PC-9 (cell line): ENCODE measurements at regions of chr13 and their contacts with region 1.

Region 1: DNA sequence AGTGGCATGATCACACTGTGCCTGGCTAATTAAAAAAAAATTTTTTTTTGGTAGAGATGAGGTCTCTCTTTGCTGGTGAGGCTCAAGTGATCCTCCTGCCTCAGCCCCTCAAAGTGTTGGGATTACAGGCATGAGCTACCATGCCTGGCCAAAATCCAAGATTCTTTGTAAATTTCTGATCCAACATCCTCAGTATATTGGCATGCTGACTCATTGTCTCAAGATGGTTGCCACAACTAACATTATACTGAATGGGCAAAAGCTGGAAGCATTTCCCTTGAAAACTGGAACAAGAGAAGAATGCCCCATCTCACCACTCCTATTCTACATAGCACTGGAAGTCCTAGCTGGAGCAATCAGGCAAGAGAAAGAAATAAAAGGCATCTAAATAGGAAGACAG is 100.0 kb downstream of the KLF5 start:
- DNase-seq: no peak
- H3K4me3 ChIP-seq: no peak overlapping the region
- H3K27ac ChIP-seq: 0 out of 2 replicates have a peak overlapping the region, but pooled peaks have one; percentile 19
- H3K4me1 ChIP-seq: peaks cover 21% of the 10 kb centered on the region
- H3K27me3 ChIP-seq: no peaks in the 10 kb centered on the region
- CTCF ChIP-seq: no peak

Region 2: GRCh38 chr13:73248711-73249578 is 90.1 kb after region 1 on chr13:
- CTCF ChIA-PET with region 1: no interaction called
- POLR2A ChIA-PET with region 1: interaction called, 13 read pairs
- intact Hi-C with region 1: no loop called
- DNase-seq: peak; percentile 60 to 89
- H3K4me3 ChIP-seq: peak overlapping the region; percentile 3; the same call in 1 of the 2 replicates
- H3K27ac ChIP-seq: peak overlapping the region; percentile 71
- H3K4me1 ChIP-seq: peaks cover 22% of the 10 kb centered on the region
- H3K27me3 ChIP-seq: no peaks in the 10 kb centered on the region
- CTCF ChIP-seq: no peak